ENCODE measurements at regions of chr12 and their contacts with region 1.

Region 1: GRCh38 chr12:64500394-64500793 is 48.5 kb downstream of the TBK1 start:
- DNase-seq: no peak
- H3K4me3 ChIP-seq: no peak overlapping the region
- H3K27ac ChIP-seq: no peak overlapping the region
- H3K4me1 ChIP-seq: no peaks in the 10 kb centered on the region
- H3K27me3 ChIP-seq: no peaks in the 10 kb centered on the region
- CTCF ChIP-seq: no peak

Region 2: GRCh38 chr12:64419696-64420095 is 80.7 kb before region 1 on chr12:
- CTCF ChIA-PET with region 1: no interaction called
- POLR2A ChIA-PET with region 1: no interaction called
- intact Hi-C with region 1: loop called (anchors 5 kb)
- DNase-seq: no peak
- H3K4me3 ChIP-seq: no peak overlapping the region
- H3K27ac ChIP-seq: no peak overlapping the region
- H3K4me1 ChIP-seq: no peaks in the 10 kb centered on the region
- H3K27me3 ChIP-seq: no peaks in the 10 kb centered on the region
- CTCF ChIP-seq: no peak

Region 3: GRCh38 chr12:64451687-64452558 is 48.5 kb before region 1 on chr12 and contains the start of gene TBK1:
- CTCF ChIA-PET with region 1: no interaction called
- POLR2A ChIA-PET with region 1: no interaction called
- intact Hi-C with region 1: no loop called
- DNase-seq: peak; percentile 74
- H3K4me3 ChIP-seq: peak within 1 kb of the TSS; percentile 90
- H3K27ac ChIP-seq: peak within 1 kb of the TSS; percentile 87
- H3K4me1 ChIP-seq: peaks cover 11% of the 10 kb centered on the region
- H3K27me3 ChIP-seq: no peaks in the 10 kb centered on the region
- CTCF ChIP-seq: no peak
- total RNA-seq, gene TBK1: 30.2 and 33.8 TPM in 2 replicates

Measured in A673 (cell line).